ENCODE measurements at regions of chr1 and their contacts with region 1.

Region 1: GRCh38 chr1:36099681-36100341 is 11.1 kb downstream of the ADPRS start:
- DNase-seq: peak; percentile 65
- H3K4me3 Mint-ChIP-seq: no peak overlapping the region
- H3K27ac Mint-ChIP-seq: no peak overlapping the region
- H3K4me1 Mint-ChIP-seq: no peaks in the 10 kb centered on the region
- H3K27me3 Mint-ChIP-seq: no peaks in the 10 kb centered on the region

Region 2: DNA sequence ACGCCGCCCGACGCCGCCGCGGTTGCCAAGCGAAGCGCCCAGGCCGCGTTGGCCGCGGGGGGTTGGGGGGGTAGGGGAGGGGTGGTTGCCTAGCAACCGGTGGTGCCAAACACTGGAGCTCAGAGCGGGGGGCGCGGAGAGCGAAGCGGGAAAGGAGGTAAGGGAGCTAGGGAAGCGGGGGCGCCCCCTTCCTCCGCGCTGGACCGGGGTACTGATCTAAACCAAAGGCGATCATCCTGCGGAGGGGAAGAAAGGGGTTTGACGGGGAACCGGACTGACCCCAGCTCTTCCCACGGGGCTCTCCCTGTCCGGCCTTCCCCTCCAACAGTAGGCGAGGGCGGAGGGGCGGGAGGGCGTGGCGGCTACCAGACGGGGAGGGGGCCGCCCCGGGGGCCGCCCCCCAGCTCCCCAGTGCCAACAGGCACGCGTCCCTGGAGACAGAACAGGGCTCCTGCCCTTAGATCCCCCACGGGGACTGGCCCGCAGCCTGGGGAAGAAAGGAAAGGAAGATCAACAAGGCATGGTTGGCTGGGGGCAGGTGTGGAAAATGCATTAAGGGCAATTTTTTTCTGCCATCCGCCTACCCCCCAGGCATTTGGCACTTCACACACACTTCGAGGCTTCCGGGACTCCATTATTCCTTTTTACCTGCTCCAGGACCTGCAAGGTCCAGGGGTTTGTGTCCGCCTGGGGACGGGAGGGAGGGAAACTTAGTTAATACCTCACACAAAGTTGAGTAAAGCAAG is 15.6 kb before region 1 on chr1 and contains the start of gene TEKT2:
- intact Hi-C with region 1: no loop called
- DNase-seq: no peak
- H3K4me3 Mint-ChIP-seq: no peak within 1 kb of the TSS
- H3K27ac Mint-ChIP-seq: no peak within 1 kb of the TSS
- H3K4me1 Mint-ChIP-seq: no peaks in the 10 kb centered on the region
- H3K27me3 Mint-ChIP-seq: peaks cover 28% of the 10 kb centered on the region
- total RNA-seq, gene TEKT2: 0.16 and 0.27 TPM in 2 replicates

Region 3: GRCh38 chr1:36134505-36135329 is 34.9 kb after region 1 on chr1:
- intact Hi-C with region 1: loop called (anchors 1 kb)
- DNase-seq: no peak
- H3K4me3 Mint-ChIP-seq: no peak overlapping the region
- H3K27ac Mint-ChIP-seq: no peak overlapping the region
- H3K4me1 Mint-ChIP-seq: no peaks in the 10 kb centered on the region
- H3K27me3 Mint-ChIP-seq: no peaks in the 10 kb centered on the region

Region 4: DNA sequence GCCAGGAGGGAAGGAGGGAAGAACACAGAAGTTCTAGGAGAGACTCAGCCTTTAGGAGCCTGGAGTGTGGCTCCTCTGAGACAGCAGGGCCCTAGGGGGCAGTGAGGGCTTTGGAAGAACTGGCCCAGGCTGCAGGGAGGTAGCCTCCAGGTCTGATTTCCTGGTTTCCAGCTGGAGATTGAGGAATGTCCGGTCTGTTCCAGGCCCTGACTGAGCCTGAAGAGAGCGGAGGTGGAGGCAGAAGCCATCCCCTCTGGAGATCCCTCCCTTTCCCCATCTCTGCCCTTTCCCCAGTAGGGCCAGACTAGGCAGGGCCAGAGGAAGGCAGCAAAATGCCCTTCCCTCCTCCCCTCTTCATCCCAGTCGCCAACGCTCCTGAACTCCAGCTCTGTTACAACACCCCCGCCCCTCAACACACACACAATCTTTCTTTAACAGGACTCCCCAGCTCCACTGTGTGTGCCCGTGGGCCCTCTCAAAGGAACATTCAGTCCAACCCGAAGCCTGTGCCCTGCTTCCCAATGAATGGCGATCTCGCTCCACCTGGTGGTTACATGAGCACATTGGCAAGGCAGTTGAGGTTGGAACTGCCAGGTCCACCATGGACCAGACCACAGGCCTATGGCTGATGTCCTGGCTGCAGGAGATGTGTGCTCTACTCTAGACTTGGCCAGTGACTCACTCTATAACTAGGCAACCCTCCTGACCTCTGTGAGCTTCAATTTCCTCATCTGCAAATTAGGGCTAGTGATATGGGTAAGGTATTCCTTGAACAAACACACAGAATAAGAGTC is 88.2 kb after region 1 on chr1:
- intact Hi-C with region 1: loop called (anchors 1 kb)
- DNase-seq: peak; percentile 76
- H3K4me3 Mint-ChIP-seq: no peak overlapping the region
- H3K27ac Mint-ChIP-seq: peak overlapping the region; percentile 88
- H3K4me1 Mint-ChIP-seq: peaks cover 6% of the 10 kb centered on the region
- H3K27me3 Mint-ChIP-seq: no peaks in the 10 kb centered on the region

Region 5: DNA sequence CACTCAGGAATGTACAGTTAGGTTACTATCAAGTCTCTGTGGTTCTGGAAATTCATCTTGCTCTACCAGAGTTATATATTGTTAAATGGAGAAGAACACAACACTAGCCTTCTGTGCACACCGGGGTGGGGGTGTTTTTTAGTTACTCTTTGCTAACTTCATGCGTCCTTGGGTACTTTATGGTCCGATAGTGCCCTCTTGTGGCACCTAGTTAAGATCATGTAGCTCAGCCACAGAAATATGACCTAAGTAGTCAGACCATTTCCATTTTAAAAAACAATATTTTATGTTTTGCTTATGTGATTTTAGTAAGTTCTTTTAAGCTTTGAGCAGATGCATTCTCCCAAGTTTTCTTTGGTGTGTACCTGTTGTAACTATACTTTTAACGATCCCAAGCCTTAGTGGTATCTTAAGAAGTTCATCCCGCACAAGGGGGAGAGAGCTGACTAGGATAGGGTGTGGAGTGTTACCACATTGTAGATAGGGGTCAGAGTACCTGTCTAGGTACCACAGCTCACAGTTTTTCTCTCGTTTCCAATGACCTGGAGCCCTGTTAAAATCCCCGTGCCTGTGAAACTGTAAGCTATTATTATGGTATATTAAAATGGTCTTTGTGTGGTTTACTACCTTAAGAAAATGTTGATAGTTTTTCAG is 185.8 kb after region 1 on chr1:
- intact Hi-C with region 1: loop called (anchors 1 kb)
- DNase-seq: peak; percentile 53
- H3K4me3 Mint-ChIP-seq: no peak overlapping the region
- H3K27ac Mint-ChIP-seq: peak overlapping the region; percentile 63
- H3K4me1 Mint-ChIP-seq: peaks cover 42% of the 10 kb centered on the region
- H3K27me3 Mint-ChIP-seq: no peaks in the 10 kb centered on the region

Region 6: DNA sequence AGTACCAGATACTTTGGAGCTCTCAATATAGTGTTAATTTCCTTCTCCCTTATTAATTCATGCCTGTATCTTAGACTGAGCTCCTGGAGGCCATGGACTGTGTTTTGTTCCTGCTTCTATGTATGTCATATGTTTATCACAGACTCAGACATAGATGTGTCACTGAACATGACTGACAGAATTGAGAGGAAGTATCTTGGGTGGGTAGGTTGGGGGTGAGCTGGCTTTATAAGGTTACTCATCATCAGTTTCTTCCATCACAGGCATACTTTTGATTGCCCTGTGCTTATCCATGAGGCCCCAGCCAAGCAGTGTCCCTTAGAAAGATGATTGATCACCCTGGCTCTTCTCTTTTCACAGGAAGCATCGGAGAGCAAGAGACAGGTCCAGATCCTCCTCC is 200.7 kb after region 1 on chr1:
- intact Hi-C with region 1: no loop called
- DNase-seq: no peak
- H3K4me3 Mint-ChIP-seq: no peak overlapping the region
- H3K27ac Mint-ChIP-seq: peak overlapping the region; percentile 85
- H3K4me1 Mint-ChIP-seq: peaks cover 36% of the 10 kb centered on the region
- H3K27me3 Mint-ChIP-seq: no peaks in the 10 kb centered on the region

Measured in activated T-helper 1 cell treated with anti-CD3 and anti-CD28 coated beads, Interleukin-12 subunit alpha, Interleukin-12 subunit beta, Interleukin-2, Interleukin-4 antibody, amounts not matched to agents 30 ng/mL and 10 ng/mL and 1 ng/mL, durations not matched to agents 14 hours and 24 hours and 36 hours (primary cell).